Caco-2 (cell line): ENCODE measurements at regions of chr17 and their contacts with region 1.

Region 1: DNA sequence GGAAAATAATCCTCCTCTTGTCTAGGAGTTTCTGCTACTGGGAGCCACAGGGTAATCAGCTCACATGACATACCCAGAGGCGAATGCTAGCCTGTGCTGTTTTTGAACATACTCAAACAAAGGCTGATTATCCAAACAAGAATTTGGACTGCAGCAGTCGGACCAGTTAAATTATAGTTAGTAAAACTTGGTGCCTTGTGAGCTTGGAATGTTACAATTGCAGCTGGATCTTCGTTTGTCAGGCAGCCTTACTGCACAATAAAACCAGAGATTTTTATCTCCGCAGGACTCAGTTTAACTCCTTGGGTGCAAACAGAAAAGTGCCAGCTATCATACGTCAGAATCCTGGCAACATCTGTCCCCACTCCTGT is 163.8 kb upstream of the TBX2 start:
- DNase-seq: peak; percentile 82 to 87
- H3K4me3 ChIP-seq: no peak overlapping the region
- H3K4me3 Mint-ChIP-seq: peak overlapping the region; percentile 32
- H3K27ac Mint-ChIP-seq: peak overlapping the region; percentile 55
- H3K4me1 ChIP-seq: peaks cover 60% of the 10 kb centered on the region
- H3K4me1 Mint-ChIP-seq: peaks cover 63% of the 10 kb centered on the region
- H3K27me3 ChIP-seq: no peaks in the 10 kb centered on the region
- H3K27me3 Mint-ChIP-seq: no peaks in the 10 kb centered on the region
- CTCF ChIP-seq: no peak

Region 2: DNA sequence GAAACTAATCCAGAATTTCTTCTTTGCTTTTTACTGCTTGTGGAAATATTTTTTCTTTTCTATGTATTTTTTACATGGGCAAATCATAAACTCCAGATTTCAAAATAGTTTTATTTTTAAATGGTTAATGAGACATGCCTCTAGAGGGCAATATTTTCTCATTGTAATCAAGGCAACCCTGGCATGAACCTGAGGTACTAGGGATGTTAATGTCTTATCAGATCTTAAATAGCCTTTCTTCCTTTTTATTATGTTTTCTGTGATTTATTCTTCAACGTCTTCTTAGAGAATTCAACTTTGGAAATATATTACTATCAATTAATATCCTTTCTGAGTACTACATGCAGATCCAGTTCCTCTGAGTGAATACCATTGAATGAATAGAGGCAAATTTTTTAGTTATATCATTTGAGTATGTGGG is 233.5 kb before region 1 on chr17:
- CTCF ChIA-PET with region 1: no interaction called
- POLR2A ChIA-PET with region 1: no interaction called
- intact Hi-C with region 1: loop called (anchors 10 kb)
- DNase-seq: peak in 1 of 2 experiments; percentile 22
- H3K4me3 ChIP-seq: no peak overlapping the region
- H3K4me3 Mint-ChIP-seq: no peak overlapping the region
- H3K27ac Mint-ChIP-seq: no peak overlapping the region
- H3K4me1 ChIP-seq: no peaks in the 10 kb centered on the region
- H3K4me1 Mint-ChIP-seq: peaks cover 9% of the 10 kb centered on the region
- H3K27me3 ChIP-seq: no peaks in the 10 kb centered on the region
- H3K27me3 Mint-ChIP-seq: no peaks in the 10 kb centered on the region
- CTCF ChIP-seq: peak; percentile 45 to 53

Region 3: GRCh38 chr17:61157246-61157886 is 78.4 kb before region 1 on chr17:
- CTCF ChIA-PET with region 1: no interaction called
- POLR2A ChIA-PET with region 1: interaction called, 3 read pairs
- intact Hi-C with region 1: loop called (anchors 10 kb)
- DNase-seq: no peak
- H3K4me3 ChIP-seq: no peak overlapping the region
- H3K4me3 Mint-ChIP-seq: no peak overlapping the region
- H3K27ac Mint-ChIP-seq: no peak overlapping the region
- H3K4me1 ChIP-seq: peaks cover 25% of the 10 kb centered on the region
- H3K4me1 Mint-ChIP-seq: peaks cover 34% of the 10 kb centered on the region
- H3K27me3 ChIP-seq: no peaks in the 10 kb centered on the region
- H3K27me3 Mint-ChIP-seq: no peaks in the 10 kb centered on the region
- CTCF ChIP-seq: no peak

Region 4: DNA sequence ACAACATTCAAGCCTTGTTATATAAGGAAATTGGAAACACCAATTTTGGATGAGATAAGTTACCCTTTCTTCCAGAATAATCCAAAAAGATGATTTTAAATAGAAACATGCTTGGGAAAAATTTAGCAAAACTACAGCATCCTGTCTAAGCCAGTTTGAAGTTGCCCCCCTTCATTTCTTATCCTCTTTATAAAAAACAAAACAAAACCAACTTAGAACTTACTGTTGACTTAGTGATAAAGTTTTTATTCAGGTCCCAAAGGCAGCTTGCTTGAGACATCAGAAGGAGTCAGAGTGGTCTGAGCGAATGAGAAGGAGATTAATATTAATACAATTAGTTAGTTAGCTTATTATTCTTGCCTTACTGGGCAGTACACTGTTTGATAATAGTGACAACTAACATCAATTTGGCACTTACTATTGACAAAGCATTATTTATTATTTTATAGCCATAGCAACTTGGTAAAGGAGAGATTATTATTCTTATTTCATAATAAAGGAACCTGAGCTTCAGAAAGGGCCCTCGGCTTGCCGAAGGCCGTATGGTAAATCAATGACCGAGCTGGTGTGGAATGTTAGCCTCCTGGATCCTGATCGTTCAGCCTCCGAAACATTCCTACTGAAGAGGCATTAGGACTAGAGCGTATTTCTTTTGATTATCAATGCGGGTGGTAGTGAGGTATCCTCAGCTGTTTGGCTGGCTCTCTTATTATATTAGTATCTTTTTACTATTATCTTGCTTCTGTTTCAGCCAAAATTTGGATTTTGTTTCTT is 35.7 kb before region 1 on chr17:
- CTCF ChIA-PET with region 1: no interaction called
- POLR2A ChIA-PET with region 1: no interaction called
- intact Hi-C with region 1: loop called (anchors 1 kb)
- DNase-seq: peak in 1 of 2 experiments; percentile 15
- H3K4me3 ChIP-seq: no peak overlapping the region
- H3K4me3 Mint-ChIP-seq: peak overlapping the region; percentile 18
- H3K27ac Mint-ChIP-seq: peak overlapping the region; percentile 47
- H3K4me1 ChIP-seq: peaks cover 34% of the 10 kb centered on the region
- H3K4me1 Mint-ChIP-seq: peaks cover 42% of the 10 kb centered on the region
- H3K27me3 ChIP-seq: no peaks in the 10 kb centered on the region
- H3K27me3 Mint-ChIP-seq: no peaks in the 10 kb centered on the region
- CTCF ChIP-seq: no peak

Region 5: DNA sequence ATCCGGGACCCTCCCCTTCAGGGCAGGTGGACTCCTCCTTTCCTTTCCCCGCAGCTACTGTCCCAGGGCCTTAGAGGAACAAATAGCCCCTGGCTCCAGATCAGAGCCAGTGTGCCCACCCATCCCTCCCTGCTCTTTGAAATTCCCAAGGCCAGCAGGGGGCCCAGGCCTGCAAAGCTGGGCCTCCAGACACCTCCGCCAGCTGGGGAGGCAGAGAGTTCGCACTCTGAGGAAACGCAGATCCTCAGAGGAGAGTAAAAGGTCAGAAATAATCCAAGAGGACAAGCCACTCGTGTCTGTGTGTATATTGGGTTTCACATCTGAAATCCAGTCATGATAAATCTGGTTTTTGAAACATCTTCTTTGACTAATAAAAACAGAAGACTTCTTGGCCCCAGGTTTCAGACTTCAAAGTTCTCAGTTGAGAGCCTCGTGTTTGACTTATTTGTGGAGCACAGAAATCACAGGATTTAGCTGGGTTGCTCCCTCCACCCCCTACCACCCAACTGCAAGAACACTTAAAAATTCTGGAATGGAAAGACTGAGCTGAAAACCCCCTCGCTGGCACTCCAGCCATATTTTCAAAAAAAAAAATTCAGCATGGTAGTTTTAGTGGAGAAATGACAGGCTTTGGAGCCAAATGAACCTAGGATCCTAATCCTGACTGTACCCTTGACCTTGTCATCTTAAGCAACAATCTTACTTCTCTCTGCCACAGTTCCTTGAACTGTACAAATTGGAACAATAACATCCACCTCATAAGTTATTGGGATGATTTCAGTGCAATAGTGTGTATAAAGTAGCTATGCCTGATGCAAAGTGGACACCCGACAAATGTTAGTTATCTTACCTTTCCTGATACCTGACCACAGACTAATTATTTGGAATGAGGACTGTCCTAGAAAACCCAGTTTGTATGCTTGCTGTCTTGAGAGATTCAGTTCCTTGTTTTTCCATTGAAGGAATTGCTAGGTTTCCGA is 119.4 kb after region 1 on chr17:
- CTCF ChIA-PET with region 1: interaction called, 3 read pairs
- POLR2A ChIA-PET with region 1: no interaction called
- intact Hi-C with region 1: loop called (anchors 5 kb)
- DNase-seq: no peak
- H3K4me3 ChIP-seq: no peak overlapping the region
- H3K4me3 Mint-ChIP-seq: no peak overlapping the region
- H3K27ac Mint-ChIP-seq: no peak overlapping the region
- H3K4me1 ChIP-seq: peaks cover 10% of the 10 kb centered on the region
- H3K4me1 Mint-ChIP-seq: no peaks in the 10 kb centered on the region
- H3K27me3 ChIP-seq: no peaks in the 10 kb centered on the region
- H3K27me3 Mint-ChIP-seq: no peaks in the 10 kb centered on the region
- CTCF ChIP-seq: no peak

Region 6: GRCh38 chr17:61389670-61390478 is 154.1 kb after region 1 on chr17:
- CTCF ChIA-PET with region 1: interaction called, 3 read pairs
- POLR2A ChIA-PET with region 1: no interaction called
- intact Hi-C with region 1: loop called (anchors 5 kb)
- DNase-seq: peak in 1 of 2 experiments; percentile 58
- H3K4me3 ChIP-seq: no peak overlapping the region
- H3K4me3 Mint-ChIP-seq: no peak overlapping the region
- H3K27ac Mint-ChIP-seq: no peak overlapping the region
- H3K4me1 ChIP-seq: peaks cover 23% of the 10 kb centered on the region
- H3K4me1 Mint-ChIP-seq: peaks cover 12% of the 10 kb centered on the region
- H3K27me3 ChIP-seq: no peaks in the 10 kb centered on the region
- H3K27me3 Mint-ChIP-seq: no peaks in the 10 kb centered on the region
- CTCF ChIP-seq: peak; percentile 75 to 85